CD4-positive, alpha-beta memory T cell (primary cell): ENCODE measurements at regions of chr19 and their contacts with region 1.

Region 1: GRCh38 chr19:21328885-21329605 is at the start of gene ZNF708:
- DNase-seq: peak; percentile 67 to 88 (median 75)
- H3K4me3 ChIP-seq: peak within 1 kb of the TSS; percentile 92 to 93
- H3K4me3 Mint-ChIP-seq: peak within 1 kb of the TSS; percentile 98 to 99 (median 99)
- H3K27ac ChIP-seq: peak within 1 kb of the TSS; percentile 94
- H3K27ac Mint-ChIP-seq: peak within 1 kb of the TSS; percentile 98 to 100 (median 99)
- H3K4me1 ChIP-seq: peaks cover 28% of the 10 kb centered on the region
- H3K4me1 Mint-ChIP-seq: peaks cover 28 to 48% (median 36%) of the 10 kb centered on the region in 4 donors
- H3K27me3 ChIP-seq: no peaks in the 10 kb centered on the region
- H3K27me3 Mint-ChIP-seq: no peaks in the 10 kb centered on the region
- total RNA-seq, gene ZNF708: 42.5 to 44.2 TPM

Region 2: GRCh38 chr19:21317821-21318220 is 11.2 kb before region 1 on chr19:
- CTCF ChIA-PET with region 1: interaction called, 3 read pairs
- POLR2A ChIA-PET with region 1: interaction called, 16 read pairs
- intact Hi-C with region 1: no loop called
- DNase-seq: no peak
- H3K4me3 ChIP-seq: no peak overlapping the region
- H3K4me3 Mint-ChIP-seq: peak overlapping the region in 1 of 8 donors; percentile 6
- H3K27ac ChIP-seq: no peak overlapping the region
- H3K27ac Mint-ChIP-seq: peak overlapping the region in 1 of 7 donors; percentile 35
- H3K4me1 ChIP-seq: peaks cover 23% of the 10 kb centered on the region
- H3K4me1 Mint-ChIP-seq: peaks cover 39 to 64% (median 51%) of the 10 kb centered on the region in 4 donors
- H3K27me3 ChIP-seq: no peaks in the 10 kb centered on the region
- H3K27me3 Mint-ChIP-seq: no peaks in the 10 kb centered on the region

Region 3: DNA sequence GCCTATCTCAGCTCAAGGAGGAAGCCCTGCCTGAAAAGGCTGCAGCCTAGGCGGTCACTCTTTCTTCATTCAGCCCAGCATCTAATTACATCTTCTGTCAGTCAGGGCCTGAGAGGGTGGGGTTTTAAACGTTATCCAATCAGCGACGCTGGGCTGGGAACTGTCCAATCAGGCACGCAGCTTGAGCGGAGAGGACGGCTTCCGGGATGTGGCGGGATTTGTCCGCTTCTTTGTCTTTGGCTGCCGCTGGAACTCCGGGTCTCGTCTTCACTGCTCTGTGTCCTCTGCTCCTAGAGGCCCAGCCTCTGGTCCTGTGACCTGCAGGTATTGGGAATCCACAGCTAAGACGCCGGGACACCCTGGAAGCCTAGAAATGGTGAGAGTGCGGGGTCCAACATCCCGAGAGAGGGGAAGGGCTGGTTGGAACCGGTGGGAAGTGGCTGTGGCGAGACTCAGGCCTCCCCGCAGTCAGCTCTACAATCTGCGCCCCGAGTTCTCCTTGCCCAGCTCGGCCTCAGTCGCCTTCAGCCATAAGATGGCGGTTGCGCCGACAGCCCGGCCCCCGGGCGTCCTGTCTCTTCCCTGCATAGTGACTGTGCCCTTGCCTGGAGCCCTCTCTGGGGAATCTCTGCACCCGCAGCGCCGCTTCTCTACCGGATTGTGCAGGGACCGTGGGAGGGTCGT is 29.9 kb after region 1 on chr19 and contains the start of gene ZNF738:
- CTCF ChIA-PET with region 1: interaction called, 4 read pairs
- POLR2A ChIA-PET with region 1: interaction called, 44 read pairs
- intact Hi-C with region 1: loop called (anchors 1 kb)
- DNase-seq: peak; percentile 80 to 87 (median 82)
- H3K4me3 ChIP-seq: peak within 1 kb of the TSS; percentile 67 to 86
- H3K4me3 Mint-ChIP-seq: peak within 1 kb of the TSS; percentile 98 to 100 (median 99)
- H3K27ac ChIP-seq: peak within 1 kb of the TSS; percentile 68
- H3K27ac Mint-ChIP-seq: peak within 1 kb of the TSS; percentile 90 to 98 (median 96)
- H3K4me1 ChIP-seq: peaks cover 8% of the 10 kb centered on the region
- H3K4me1 Mint-ChIP-seq: peaks cover 4 to 14% (median 11%) of the 10 kb centered on the region in 4 donors
- H3K27me3 ChIP-seq: no peaks in the 10 kb centered on the region
- H3K27me3 Mint-ChIP-seq: no peaks in the 10 kb centered on the region
- total RNA-seq, gene ZNF738: 9.8 to 11.4 TPM

Region 4: GRCh38 chr19:21396893-21397572 is 68.0 kb after region 1 on chr19 and contains the start of gene ZNF493:
- CTCF ChIA-PET with region 1: interaction called, 3 read pairs
- POLR2A ChIA-PET with region 1: interaction called, 38 read pairs
- intact Hi-C with region 1: loop called (anchors 1 kb)
- DNase-seq: peak; percentile 92 to 95 (median 92)
- H3K4me3 ChIP-seq: peak within 1 kb of the TSS; percentile 10 to 76
- H3K4me3 Mint-ChIP-seq: peak within 1 kb of the TSS; percentile 85 to 99 (median 97)
- H3K27ac ChIP-seq: peak within 1 kb of the TSS; percentile 69
- H3K27ac Mint-ChIP-seq: peak within 1 kb of the TSS; percentile 82 to 96 (median 90)
- H3K4me1 ChIP-seq: peaks cover 19% of the 10 kb centered on the region
- H3K4me1 Mint-ChIP-seq: peaks cover 18 to 44% (median 30%) of the 10 kb centered on the region in 4 donors
- H3K27me3 ChIP-seq: no peaks in the 10 kb centered on the region
- H3K27me3 Mint-ChIP-seq: no peaks in the 10 kb centered on the region
- total RNA-seq, gene ZNF493: 57.4 to 61.7 TPM

Region 5: GRCh38 chr19:21835810-21836444 is 506.9 kb after region 1 on chr19 and contains the start of gene ZNF43:
- CTCF ChIA-PET with region 1: no interaction called
- POLR2A ChIA-PET with region 1: interaction called, 11 read pairs
- intact Hi-C with region 1: no loop called
- DNase-seq: peak; percentile 92 to 95 (median 92)
- H3K4me3 ChIP-seq: peak within 1 kb of the TSS; percentile 73 to 93
- H3K4me3 Mint-ChIP-seq: peak within 1 kb of the TSS; percentile 97 to 99 (median 99)
- H3K27ac ChIP-seq: peak within 1 kb of the TSS; percentile 80
- H3K27ac Mint-ChIP-seq: peak within 1 kb of the TSS; percentile 95 to 99 (median 98)
- H3K4me1 ChIP-seq: peaks cover 16% of the 10 kb centered on the region
- H3K4me1 Mint-ChIP-seq: peaks cover 15 to 44% (median 31%) of the 10 kb centered on the region in 4 donors
- H3K27me3 ChIP-seq: no peaks in the 10 kb centered on the region
- H3K27me3 Mint-ChIP-seq: no peaks in the 10 kb centered on the region
- total RNA-seq, gene ZNF43: 27.6 to 31.9 TPM